Activated T-helper 1 cell treated with anti-CD3 and anti-CD28 coated beads, Interleukin-12 subunit alpha, Interleukin-12 subunit beta, Interleukin-2, Interleukin-4 antibody, amounts not matched to agents 30 ng/mL and 10 ng/mL and 1 ng/mL, durations not matched to agents 14 hours and 24 hours and 36 hours (primary cell): ENCODE measurements at regions of chr17 and their contacts with region 1.

Region 1: GRCh38 chr17:7004398-7005253 is 7.8 kb upstream of the RNASEK start:
- DNase-seq: peak; percentile 48
- H3K4me3 Mint-ChIP-seq: no peak overlapping the region
- H3K27ac Mint-ChIP-seq: peak overlapping the region; percentile 63
- H3K4me1 Mint-ChIP-seq: peaks cover 25% of the 10 kb centered on the region
- H3K27me3 Mint-ChIP-seq: no peaks in the 10 kb centered on the region

Region 2: GRCh38 chr17:6666077-6666521 is 338.5 kb before region 1 on chr17:
- intact Hi-C with region 1: loop called (anchors 1 kb)
- DNase-seq: no peak
- H3K4me3 Mint-ChIP-seq: no peak overlapping the region
- H3K27ac Mint-ChIP-seq: no peak overlapping the region
- H3K4me1 Mint-ChIP-seq: peaks cover 13% of the 10 kb centered on the region
- H3K27me3 Mint-ChIP-seq: peaks cover 13% of the 10 kb centered on the region

Region 3: GRCh38 chr17:6913608-6914443 is 90.8 kb before region 1 on chr17:
- intact Hi-C with region 1: loop called (anchors 1 kb)
- DNase-seq: peak; percentile 48
- H3K4me3 Mint-ChIP-seq: peak overlapping the region; percentile 76
- H3K27ac Mint-ChIP-seq: no peak overlapping the region
- H3K4me1 Mint-ChIP-seq: peaks cover 33% of the 10 kb centered on the region
- H3K27me3 Mint-ChIP-seq: peaks cover 18% of the 10 kb centered on the region

Region 4: DNA sequence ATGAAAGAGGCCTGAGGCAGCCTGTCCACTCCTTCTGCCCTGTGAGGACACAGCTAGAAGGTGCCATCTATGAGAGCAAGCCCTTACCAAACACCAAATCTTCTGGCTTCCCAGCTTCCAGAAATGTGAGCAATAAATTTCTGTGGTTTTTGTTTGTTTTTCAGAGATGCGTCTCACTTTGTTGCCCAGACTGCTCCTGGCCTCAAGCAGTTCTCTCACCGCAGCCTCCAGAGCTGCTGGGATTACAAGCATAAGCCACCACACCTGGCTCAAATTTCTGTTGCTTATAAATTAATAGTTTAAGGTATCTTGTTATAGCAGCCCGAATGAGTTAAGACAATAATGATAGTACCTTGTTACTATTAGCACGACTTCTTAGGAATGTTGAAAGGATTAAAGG is 51.8 kb after region 1 on chr17:
- intact Hi-C with region 1: no loop called
- DNase-seq: no peak
- H3K4me3 Mint-ChIP-seq: no peak overlapping the region
- H3K27ac Mint-ChIP-seq: no peak overlapping the region
- H3K4me1 Mint-ChIP-seq: peaks cover 19% of the 10 kb centered on the region
- H3K27me3 Mint-ChIP-seq: peaks cover 4% of the 10 kb centered on the region

Region 5: GRCh38 chr17:7072406-7072805 is 67.8 kb after region 1 on chr17:
- intact Hi-C with region 1: no loop called
- DNase-seq: no peak
- H3K4me3 Mint-ChIP-seq: no peak overlapping the region
- H3K27ac Mint-ChIP-seq: no peak overlapping the region
- H3K4me1 Mint-ChIP-seq: no peaks in the 10 kb centered on the region
- H3K27me3 Mint-ChIP-seq: peaks cover 10% of the 10 kb centered on the region

Region 6: GRCh38 chr17:7239091-7240027 is 234.7 kb after region 1 on chr17 and contains the start of gene PHF23:
- intact Hi-C with region 1: no loop called
- DNase-seq: peak; percentile 98
- H3K4me3 Mint-ChIP-seq: peak within 1 kb of the TSS; percentile 97
- H3K27ac Mint-ChIP-seq: peak within 1 kb of the TSS; percentile 94
- H3K4me1 Mint-ChIP-seq: peaks cover 68% of the 10 kb centered on the region
- H3K27me3 Mint-ChIP-seq: no peaks in the 10 kb centered on the region
- total RNA-seq, gene PHF23: 52.5 and 55.4 TPM in 2 replicates